Dorsolateral prefrontal cortex (tissue), 120 donors: ENCODE measurements at regions of chr17 and their contacts with region 1.

Region 1: GRCh38 chr17:3796110-3796821 is 4.7 kb downstream of the ITGAE start:
- DNase-seq: peak in 1 of 10 donors; percentile 63
- H3K4me3 ChIP-seq: no peak overlapping the region
- H3K27ac ChIP-seq: no peak overlapping the region
- H3K27me3 ChIP-seq: no peaks in the 10 kb centered on the region
- CTCF ChIP-seq: no peak

Region 2: DNA sequence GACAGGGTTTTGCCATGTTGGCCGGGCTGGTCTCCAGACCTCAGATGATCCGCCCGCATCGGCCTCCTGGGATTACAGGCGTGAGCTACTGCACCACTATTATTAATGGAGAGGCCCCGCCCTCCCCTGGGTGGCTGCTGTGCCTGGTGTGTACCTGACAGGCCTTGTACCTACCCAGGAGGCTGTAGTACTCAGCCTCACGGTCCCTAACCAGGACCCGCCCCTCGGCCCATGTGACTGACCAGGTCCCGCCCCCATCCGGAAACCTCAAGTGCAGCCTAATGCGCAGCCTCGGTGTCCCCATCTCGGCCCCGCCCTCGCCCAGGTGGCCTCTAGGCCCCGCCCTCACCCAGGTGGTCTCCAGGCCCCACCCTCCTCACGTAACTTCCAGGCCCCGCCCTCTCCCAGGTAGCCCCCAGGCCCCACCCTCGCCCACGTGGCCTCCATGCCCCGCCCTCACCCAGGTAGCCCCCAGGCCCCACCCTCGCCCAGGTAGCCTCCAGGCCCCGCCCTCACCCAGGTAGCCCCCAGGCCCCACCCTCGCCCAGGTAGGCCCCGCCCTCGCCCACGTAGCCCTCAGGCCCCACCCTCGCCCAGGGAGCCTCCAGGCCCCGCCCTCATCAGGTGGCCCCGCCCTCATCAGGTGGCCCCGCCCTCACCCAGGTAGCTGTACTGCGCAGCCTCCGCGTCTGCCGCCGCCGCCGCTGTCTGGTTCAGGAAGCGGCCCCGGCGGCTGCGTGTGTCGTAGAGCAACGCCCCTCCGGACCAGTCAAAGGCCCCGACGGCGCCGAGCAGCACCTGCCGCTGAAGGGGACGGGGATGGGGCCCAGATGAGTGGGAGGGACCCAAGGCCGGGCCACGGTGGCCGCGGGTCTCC is 41.6 kb before region 1 on chr17:
- intact Hi-C with region 1: loop called in 1 of 2 experiments (anchors 5 kb)
- DNase-seq: no peak
- H3K4me3 ChIP-seq: peak overlapping the region in 12 of 59 donors; percentile 0 to 31 (median 16)
- H3K27ac ChIP-seq: no peak overlapping the region
- H3K27me3 ChIP-seq: peaks cover 0 to 3% (median 0%) of the 10 kb centered on the region in 45 donors
- CTCF ChIP-seq: no peak